ENCODE measurements at regions of chr22 and their contacts with region 1.

Region 1: DNA sequence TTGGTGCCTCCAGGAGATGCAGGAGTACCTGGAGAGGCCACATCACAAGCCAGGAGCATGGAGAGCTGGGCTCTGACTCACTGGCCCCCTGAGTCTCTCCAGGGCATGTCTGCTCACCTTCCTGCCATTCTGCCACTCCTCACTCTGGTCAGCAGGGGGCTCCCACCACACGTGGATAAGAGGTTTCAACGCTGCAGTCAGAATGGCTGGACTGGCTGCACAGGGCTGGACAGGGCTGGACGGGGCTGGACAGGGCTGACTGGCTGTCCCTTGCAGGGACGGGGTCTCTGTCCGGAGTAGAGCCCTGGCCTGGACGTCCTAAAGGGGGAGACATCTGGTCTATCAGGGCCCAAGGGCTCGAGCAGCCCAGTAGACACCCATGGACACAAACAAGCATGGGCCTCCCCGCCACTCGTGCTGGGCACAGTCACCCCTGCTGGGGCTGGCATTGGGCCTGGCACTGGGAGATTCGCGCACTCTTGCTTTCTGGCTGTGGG is 34.6 kb downstream of the CYTH4 start:
- DNase-seq: peak; percentile 52 to 68
- ATAC-seq: peak; percentile 90

Region 2: DNA sequence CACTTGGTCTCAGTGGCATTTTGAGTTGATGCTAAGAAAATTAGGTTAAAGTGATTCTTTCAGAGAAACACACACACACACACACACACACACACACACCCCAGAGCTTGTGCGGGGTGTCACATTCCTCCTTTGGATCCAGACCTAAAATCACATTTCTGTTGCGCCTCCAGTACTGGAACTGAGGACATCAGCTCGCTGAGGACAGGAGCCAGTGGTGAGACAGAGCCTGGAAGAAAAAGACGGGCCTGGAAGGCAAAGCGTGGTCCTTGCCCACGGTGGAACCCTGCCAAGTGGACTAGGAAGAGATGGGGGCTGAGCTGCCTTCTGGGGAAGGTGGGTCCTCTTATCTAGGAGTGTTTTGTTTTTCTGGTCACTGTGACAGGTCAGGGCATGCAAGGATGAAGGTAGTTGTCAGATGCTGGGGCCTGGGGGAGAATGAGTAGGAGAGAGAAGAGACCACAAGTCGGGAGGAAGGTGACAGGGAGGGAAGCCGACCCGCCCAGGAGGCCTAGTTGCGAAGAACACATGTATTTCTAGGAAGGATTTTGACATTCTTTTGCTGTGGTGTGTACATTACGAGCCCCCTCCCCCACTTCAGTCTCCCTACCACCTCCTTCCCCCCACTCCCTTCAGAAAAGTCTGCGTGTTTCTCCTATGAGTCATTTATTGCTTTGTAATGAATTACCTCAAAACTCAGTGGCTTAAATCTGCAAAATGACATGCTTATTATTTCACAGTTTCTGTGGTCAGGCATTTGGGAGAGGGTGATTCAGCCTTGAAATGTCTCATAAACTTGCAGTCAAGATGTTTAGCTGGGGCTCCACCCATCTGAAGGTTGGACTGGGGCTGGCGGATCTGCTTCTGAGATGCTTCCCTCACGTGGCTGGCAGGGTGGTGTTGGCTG is 115.1 kb after region 1 on chr22:
- intact Hi-C with region 1: loop called (anchors 10 kb)
- DNase-seq: no peak
- ATAC-seq: no peak

Measured in left colon (tissue), 2 donors.